ENCODE measurements at regions of chr4 and their contacts with region 1.

Region 1: GRCh38 chr4:38759113-38759789 is 23.5 kb downstream of the TLR10 start:
- DNase-seq: peak in 1 of 2 donors; percentile 19
- ATAC-seq: peak in 3 of 4 donors; percentile 28 to 78 (median 73)
- H3K4me3 ChIP-seq: no peak overlapping the region
- H3K27ac ChIP-seq: no peak overlapping the region
- H3K4me1 ChIP-seq: peaks cover 3% of the 10 kb centered on the region
- H3K27me3 ChIP-seq: no peaks in the 10 kb centered on the region
- CTCF ChIP-seq: peak; percentile 71

Region 2: GRCh38 chr4:38856524-38857337 is 97.5 kb after region 1 on chr4 and contains the start of gene TLR6:
- intact Hi-C with region 1: loop called (anchors 5 kb)
- DNase-seq: no peak
- ATAC-seq: peak in 3 of 4 donors; percentile 66 to 84 (median 73)
- H3K4me3 ChIP-seq: peak within 1 kb of the TSS; percentile 51
- H3K27ac ChIP-seq: peak within 1 kb of the TSS; percentile 80
- H3K4me1 ChIP-seq: peaks cover 17% of the 10 kb centered on the region
- H3K27me3 ChIP-seq: no peaks in the 10 kb centered on the region
- CTCF ChIP-seq: peak; percentile 75
- total RNA-seq, gene TLR6: 0.79 to 1.3 (median 1.2) TPM

Region 3: DNA sequence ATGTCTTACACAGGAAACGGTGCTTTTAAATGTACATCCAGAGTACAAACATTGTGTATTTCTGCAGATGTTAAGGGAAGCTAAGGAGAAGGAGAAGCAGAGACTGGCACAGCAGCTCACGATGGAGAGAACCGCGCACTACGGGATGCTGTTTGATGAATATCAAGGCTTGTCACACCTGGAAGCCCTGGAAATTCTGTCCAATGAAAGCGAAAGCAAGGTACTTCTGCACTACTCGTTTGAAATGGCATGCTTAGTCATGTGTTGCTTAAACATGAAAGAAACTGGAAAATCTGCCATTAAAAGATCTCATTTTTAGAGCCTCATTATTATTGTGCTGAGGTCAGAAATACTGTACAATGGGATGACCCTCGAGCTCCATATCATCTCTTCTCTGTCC is 155.6 kb after region 1 on chr4:
- intact Hi-C with region 1: no loop called
- DNase-seq: no peak
- ATAC-seq: no peak
- H3K4me3 ChIP-seq: no peak overlapping the region
- H3K27ac ChIP-seq: no peak overlapping the region
- H3K4me1 ChIP-seq: no peaks in the 10 kb centered on the region
- H3K27me3 ChIP-seq: no peaks in the 10 kb centered on the region
- CTCF ChIP-seq: no peak

Measured in psoas muscle (tissue), 8 donors.